Activated CD8-positive, alpha-beta T cell treated with anti-CD3 and anti-CD28 coated beads, Interleukin-2, amount 10 ng/mL, durations not matched to agents 7 days and 5 days (primary cell): ENCODE measurements at regions of chr3 and their contacts with region 1.

Region 1: GRCh38 chr3:58008140-58009025 is at the start of gene FLNB:
- DNase-seq: peak; percentile 81
- ATAC-seq: peak; percentile 86
- H3K4me3 Mint-ChIP-seq: peak within 1 kb of the TSS; percentile 89
- H3K27ac Mint-ChIP-seq: peak within 1 kb of the TSS; percentile 87
- H3K4me1 Mint-ChIP-seq: peaks cover 36% of the 10 kb centered on the region
- H3K27me3 Mint-ChIP-seq: no peaks in the 10 kb centered on the region
- total RNA-seq, gene FLNB: 14.1 to 15.9 TPM

Region 2: GRCh38 chr3:57877116-57877515 is 131.3 kb before region 1 on chr3:
- CTCF ChIA-PET with region 1: no interaction called
- POLR2A ChIA-PET with region 1: no interaction called
- DNase-seq: no peak
- ATAC-seq: no peak
- H3K4me3 Mint-ChIP-seq: no peak overlapping the region
- H3K27ac Mint-ChIP-seq: no peak overlapping the region
- H3K4me1 Mint-ChIP-seq: no peaks in the 10 kb centered on the region
- H3K27me3 Mint-ChIP-seq: no peaks in the 10 kb centered on the region

Region 3: DNA sequence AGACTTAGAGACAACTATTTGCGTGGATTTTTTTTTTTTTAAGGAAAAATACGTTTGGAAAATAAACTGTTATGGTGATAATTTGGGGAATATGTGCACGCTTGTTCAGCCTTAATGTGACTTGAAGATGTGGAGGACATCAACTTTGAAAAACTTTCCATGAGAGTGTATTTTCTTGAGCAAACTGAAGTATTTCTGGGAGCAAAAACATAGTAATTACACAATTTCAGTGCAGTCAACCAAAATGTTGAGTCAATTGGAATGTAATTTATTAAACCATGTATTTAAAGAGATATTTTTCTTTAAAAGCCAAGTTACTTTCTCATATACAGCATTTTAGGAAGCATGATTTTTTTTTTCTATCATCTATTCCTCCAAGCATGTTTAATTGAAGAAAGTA is 80.5 kb before region 1 on chr3:
- CTCF ChIA-PET with region 1: no interaction called
- POLR2A ChIA-PET with region 1: no interaction called
- DNase-seq: no peak
- ATAC-seq: no peak
- H3K4me3 Mint-ChIP-seq: no peak overlapping the region
- H3K27ac Mint-ChIP-seq: no peak overlapping the region
- H3K4me1 Mint-ChIP-seq: peaks cover 7% of the 10 kb centered on the region
- H3K27me3 Mint-ChIP-seq: no peaks in the 10 kb centered on the region

Region 4: DNA sequence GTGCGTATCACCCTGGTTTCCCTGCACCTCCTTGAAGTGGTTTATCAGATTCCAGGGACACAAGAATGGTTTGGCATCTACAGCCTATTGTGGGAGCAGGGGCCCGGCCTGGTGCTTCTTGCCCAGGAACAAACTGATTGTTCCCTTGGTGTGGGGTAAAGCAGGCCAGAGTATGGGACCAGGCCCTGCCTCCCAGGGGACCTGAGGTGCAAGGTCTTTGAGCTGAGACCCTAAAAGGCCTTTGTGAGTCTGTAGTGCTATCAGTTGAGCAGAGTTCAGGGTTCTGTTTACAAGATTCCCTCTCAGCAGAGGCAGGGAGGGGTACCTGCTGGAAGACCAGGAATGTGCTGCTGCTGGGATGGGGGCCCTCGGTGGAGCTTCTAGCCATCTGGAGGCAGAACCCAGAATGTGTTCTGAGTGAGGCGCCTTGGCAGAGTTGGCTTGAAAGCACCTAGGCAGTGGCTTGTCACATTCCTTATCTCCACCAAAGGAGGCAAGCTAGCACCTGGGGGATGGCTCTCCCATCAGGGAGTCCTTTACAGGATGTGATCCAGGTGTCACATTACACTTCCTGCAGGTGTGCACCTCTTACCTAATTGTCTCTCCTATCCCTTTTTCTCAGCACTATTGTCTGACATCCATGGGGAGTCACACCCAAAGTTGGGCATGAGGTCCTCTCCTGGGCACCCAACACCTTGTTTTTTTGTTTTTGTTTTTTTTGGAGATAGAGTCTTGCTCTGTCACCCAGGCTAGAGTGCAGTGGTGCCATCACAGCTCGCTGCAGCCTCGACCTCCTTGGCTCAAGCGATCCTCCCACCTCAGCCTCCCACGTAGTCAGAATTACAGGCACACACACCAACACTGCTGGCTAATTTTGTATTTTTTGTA is 12.9 kb after region 1 on chr3:
- CTCF ChIA-PET with region 1: interaction called, 16 read pairs
- POLR2A ChIA-PET with region 1: no interaction called
- DNase-seq: no peak
- ATAC-seq: no peak
- H3K4me3 Mint-ChIP-seq: no peak overlapping the region
- H3K27ac Mint-ChIP-seq: no peak overlapping the region
- H3K4me1 Mint-ChIP-seq: peaks cover 15% of the 10 kb centered on the region
- H3K27me3 Mint-ChIP-seq: no peaks in the 10 kb centered on the region

Region 5: GRCh38 chr3:58041654-58042324 is 33.4 kb after region 1 on chr3:
- CTCF ChIA-PET with region 1: interaction called, 11 read pairs
- POLR2A ChIA-PET with region 1: no interaction called
- DNase-seq: peak; percentile 28
- ATAC-seq: peak; percentile 62
- H3K4me3 Mint-ChIP-seq: no peak overlapping the region
- H3K27ac Mint-ChIP-seq: peak overlapping the region; percentile 54
- H3K4me1 Mint-ChIP-seq: peaks cover 33% of the 10 kb centered on the region
- H3K27me3 Mint-ChIP-seq: peaks cover 4% of the 10 kb centered on the region

Region 6: DNA sequence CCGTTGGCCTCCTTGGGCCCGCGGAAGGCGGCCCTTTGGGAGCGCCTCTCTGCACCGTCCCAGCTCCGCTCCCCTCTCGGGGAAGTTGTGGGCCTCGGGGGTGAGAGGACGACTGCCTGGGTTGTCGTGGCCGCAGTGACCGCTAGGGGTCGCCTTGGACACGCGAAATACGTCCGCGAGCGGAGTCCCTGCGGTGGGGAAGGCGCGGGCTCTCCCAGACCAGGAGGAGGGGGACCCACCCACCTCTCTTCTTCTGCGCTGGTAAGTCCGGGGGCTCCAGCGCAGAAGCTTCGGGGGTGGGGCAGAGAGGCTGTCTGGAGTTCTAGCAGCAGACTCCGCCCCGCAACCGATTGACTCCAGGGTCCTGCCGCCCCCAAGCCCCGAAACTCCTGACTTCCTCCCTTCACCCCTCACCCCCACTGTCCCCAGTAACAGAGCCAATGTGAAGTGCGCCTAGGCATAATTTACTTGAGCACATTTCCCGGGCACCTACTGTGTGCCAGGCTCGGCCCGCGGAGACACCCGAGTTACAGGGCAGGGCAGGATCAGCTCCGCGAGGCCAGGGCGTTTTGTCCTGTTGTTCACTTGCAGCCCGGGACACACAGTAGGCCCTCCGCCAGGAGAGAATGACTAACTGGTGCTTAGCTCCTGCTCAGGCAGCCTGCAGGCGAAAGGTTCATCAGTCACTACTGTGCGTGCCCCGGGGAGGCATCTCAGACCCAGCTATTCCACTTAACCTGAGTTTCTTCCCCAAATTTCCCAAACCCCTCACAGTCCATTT is 169.6 kb after region 1 on chr3:
- CTCF ChIA-PET with region 1: interaction called, 29 read pairs
- POLR2A ChIA-PET with region 1: no interaction called
- DNase-seq: peak; percentile 91
- ATAC-seq: peak; percentile 98
- H3K4me3 Mint-ChIP-seq: peak overlapping the region; percentile 60
- H3K27ac Mint-ChIP-seq: no peak overlapping the region
- H3K4me1 Mint-ChIP-seq: peaks cover 20% of the 10 kb centered on the region
- H3K27me3 Mint-ChIP-seq: peaks cover 2% of the 10 kb centered on the region